Activated CD4-positive, alpha-beta T cell treated with anti-CD3 and anti-CD28 coated beads for 36 hours (primary cell): ENCODE measurements at regions of chr1 and their contacts with region 1.

Region 1: DNA sequence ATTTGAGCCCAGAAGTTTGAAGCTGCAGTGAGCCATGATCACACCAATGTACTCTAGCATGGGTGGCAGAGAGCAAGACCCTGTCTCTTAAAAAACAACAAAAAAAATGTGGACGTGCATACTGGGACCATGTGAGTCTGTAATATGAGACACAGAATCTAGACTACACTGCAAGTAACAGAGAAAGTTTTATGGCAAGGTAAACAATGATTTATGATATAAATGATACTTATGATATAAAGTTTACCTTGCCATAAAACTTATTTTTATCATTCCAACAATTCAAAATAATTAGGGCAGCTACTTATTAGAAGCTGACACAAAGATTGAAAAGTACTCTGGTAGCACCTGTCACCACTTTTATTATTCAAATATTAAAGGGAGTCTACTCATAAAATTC is 34.7 kb downstream of the WDR26 start:
- DNase-seq: no peak
- ATAC-seq: no peak
- H3K4me3 Mint-ChIP-seq: no peak overlapping the region
- H3K27ac Mint-ChIP-seq: no peak overlapping the region
- H3K4me1 Mint-ChIP-seq: peaks cover 24% of the 10 kb centered on the region
- H3K27me3 Mint-ChIP-seq: no peaks in the 10 kb centered on the region

Region 2: GRCh38 chr1:224106568-224107281 is 293.2 kb before region 1 on chr1:
- CTCF ChIA-PET with region 1: no interaction called
- POLR2A ChIA-PET with region 1: no interaction called
- intact Hi-C with region 1: no loop called
- DNase-seq: peak; percentile 30
- ATAC-seq: peak; percentile 83
- H3K4me3 Mint-ChIP-seq: no peak overlapping the region
- H3K27ac Mint-ChIP-seq: no peak overlapping the region
- H3K4me1 Mint-ChIP-seq: no peaks in the 10 kb centered on the region
- H3K27me3 Mint-ChIP-seq: peaks cover 11% of the 10 kb centered on the region

Region 3: GRCh38 chr1:224253721-224254120 is 146.2 kb before region 1 on chr1:
- CTCF ChIA-PET with region 1: no interaction called
- POLR2A ChIA-PET with region 1: no interaction called
- intact Hi-C with region 1: no loop called
- DNase-seq: no peak
- ATAC-seq: no peak
- H3K4me3 Mint-ChIP-seq: no peak overlapping the region
- H3K27ac Mint-ChIP-seq: no peak overlapping the region
- H3K4me1 Mint-ChIP-seq: no peaks in the 10 kb centered on the region
- H3K27me3 Mint-ChIP-seq: no peaks in the 10 kb centered on the region

Region 4: GRCh38 chr1:224411766-224412165 is 11.9 kb after region 1 on chr1:
- CTCF ChIA-PET with region 1: interaction called, 6 read pairs
- POLR2A ChIA-PET with region 1: no interaction called
- intact Hi-C with region 1: loop called in 1 of 2 experiments (anchors 2 kb)
- DNase-seq: no peak
- ATAC-seq: peak; percentile 57
- H3K4me3 Mint-ChIP-seq: no peak overlapping the region
- H3K27ac Mint-ChIP-seq: peak overlapping the region; percentile 51
- H3K4me1 Mint-ChIP-seq: peaks cover 17% of the 10 kb centered on the region
- H3K27me3 Mint-ChIP-seq: no peaks in the 10 kb centered on the region